Activated CD4-positive, alpha-beta memory T cell treated with anti-CD3 and anti-CD28 coated beads for 36 hours (primary cell): ENCODE measurements at regions of chr4 and their contacts with region 1.

Region 1: GRCh38 chr4:80058740-80059139 is 14.3 kb downstream of the ANTXR2 start:
- DNase-seq: peak; percentile 66
- H3K4me3 Mint-ChIP-seq: peak overlapping the region; percentile 72
- H3K27ac Mint-ChIP-seq: peak overlapping the region; percentile 91
- H3K4me1 Mint-ChIP-seq: peaks cover 70% of the 10 kb centered on the region
- H3K27me3 Mint-ChIP-seq: no peaks in the 10 kb centered on the region

Region 2: DNA sequence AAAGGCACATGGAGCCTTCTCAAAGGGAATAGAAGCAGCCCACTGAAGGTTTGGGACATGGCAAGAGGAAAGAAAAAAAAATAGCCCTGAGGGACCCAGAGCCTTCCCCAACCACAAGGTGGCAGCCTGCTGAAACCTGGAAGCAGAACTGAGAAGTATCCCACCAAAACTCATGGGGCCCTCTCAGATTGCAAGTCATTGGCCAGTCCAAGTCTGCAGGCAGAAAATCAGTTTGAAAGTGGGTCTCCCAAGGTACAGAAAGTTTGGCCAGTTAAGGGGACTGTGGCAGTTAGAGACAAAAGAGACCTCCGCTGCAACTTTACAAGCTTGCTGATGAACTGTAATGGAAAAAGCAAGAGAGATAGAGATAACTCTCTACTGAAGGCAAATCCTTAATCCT is 141.5 kb before region 1 on chr4:
- CTCF ChIA-PET with region 1: no interaction called
- POLR2A ChIA-PET with region 1: no interaction called
- intact Hi-C with region 1: loop called (anchors 2 kb)
- DNase-seq: peak; percentile 65
- H3K4me3 Mint-ChIP-seq: no peak overlapping the region
- H3K27ac Mint-ChIP-seq: no peak overlapping the region
- H3K4me1 Mint-ChIP-seq: peaks cover 20% of the 10 kb centered on the region
- H3K27me3 Mint-ChIP-seq: no peaks in the 10 kb centered on the region

Region 3: GRCh38 chr4:80017125-80017854 is 41.5 kb before region 1 on chr4:
- CTCF ChIA-PET with region 1: no interaction called
- POLR2A ChIA-PET with region 1: no interaction called
- intact Hi-C with region 1: loop called (anchors 1 kb)
- DNase-seq: peak; percentile 16
- H3K4me3 Mint-ChIP-seq: no peak overlapping the region
- H3K27ac Mint-ChIP-seq: no peak overlapping the region
- H3K4me1 Mint-ChIP-seq: peaks cover 4% of the 10 kb centered on the region
- H3K27me3 Mint-ChIP-seq: no peaks in the 10 kb centered on the region

Region 4: GRCh38 chr4:80036949-80037685 is 21.6 kb before region 1 on chr4:
- CTCF ChIA-PET with region 1: interaction called, 3 read pairs
- POLR2A ChIA-PET with region 1: no interaction called
- intact Hi-C with region 1: loop called (anchors 1 kb)
- DNase-seq: no peak
- H3K4me3 Mint-ChIP-seq: peak overlapping the region; percentile 58
- H3K27ac Mint-ChIP-seq: peak overlapping the region; percentile 89
- H3K4me1 Mint-ChIP-seq: peaks cover 54% of the 10 kb centered on the region
- H3K27me3 Mint-ChIP-seq: no peaks in the 10 kb centered on the region